Spleen (tissue), 13 donors: ENCODE measurements at regions of chr6 and their contacts with region 1.

Region 1: DNA sequence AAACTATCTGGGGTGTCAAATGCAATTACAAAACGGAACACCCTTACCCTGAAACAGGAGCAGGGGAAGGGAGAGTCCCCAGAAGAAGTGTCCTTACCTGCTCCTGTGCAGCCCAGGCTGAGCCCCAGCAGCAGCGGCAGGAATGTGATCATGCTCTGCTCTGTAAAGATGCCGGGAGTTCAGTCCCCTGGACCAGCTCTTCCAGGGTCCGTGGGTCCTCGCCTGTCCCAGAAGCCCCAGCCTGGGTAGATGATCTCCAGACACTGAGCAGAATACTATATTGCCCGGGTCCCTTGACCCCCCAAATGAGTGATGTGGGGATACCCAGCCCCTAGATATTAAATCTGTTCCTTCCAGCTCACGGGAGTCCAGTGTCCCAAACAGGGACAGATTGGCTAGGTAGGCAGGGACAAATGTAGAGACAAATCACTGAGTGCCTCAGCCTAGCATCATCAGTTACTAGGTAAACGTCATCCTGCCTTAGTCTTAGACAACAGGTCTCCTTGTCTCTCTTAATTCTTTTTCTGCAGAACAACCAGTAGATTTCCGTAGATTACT is at the start of gene HLA-DMB:
- DNase-seq: no peak
- H3K4me3 ChIP-seq: peak within 1 kb of the TSS; percentile 39 to 81 (median 64)
- H3K27ac ChIP-seq: peak within 1 kb of the TSS; percentile 79 to 96 (median 92)
- H3K4me1 ChIP-seq: peaks cover 43 to 100% (median 96%) of the 10 kb centered on the region in 6 donors
- H3K27me3 ChIP-seq: no peaks in the 10 kb centered on the region
- CTCF ChIP-seq: no peak
- POLR2A ChIP-seq: peak in 1 of 3 donors; percentile 86
- total RNA-seq, gene HLA-DMB: 124 to 178 (median 144) TPM

Region 2: GRCh38 chr6:32876603-32877002 is 64.1 kb before region 1 on chr6:
- intact Hi-C with region 1: no loop called
- DNase-seq: no peak
- H3K4me3 ChIP-seq: no peak overlapping the region
- H3K27ac ChIP-seq: no peak overlapping the region
- H3K4me1 ChIP-seq: no peaks in the 10 kb centered on the region
- H3K27me3 ChIP-seq: peaks cover 0 to 13% (median 0%) of the 10 kb centered on the region in 7 donors
- CTCF ChIP-seq: no peak
- POLR2A ChIP-seq: no peak

Region 3: GRCh38 chr6:32894080-32895005 is 46.4 kb before region 1 on chr6:
- intact Hi-C with region 1: loop called (anchors 10 kb)
- DNase-seq: peak; percentile 98
- H3K4me3 ChIP-seq: peak overlapping the region; percentile 65 to 90 (median 80)
- H3K27ac ChIP-seq: peak overlapping the region; percentile 71 to 96 (median 94)
- H3K4me1 ChIP-seq: peaks cover 8 to 66% (median 41%) of the 10 kb centered on the region in 6 donors
- H3K27me3 ChIP-seq: no peaks in the 10 kb centered on the region
- CTCF ChIP-seq: peak in 2 of 11 experiments; percentile 8 to 22
- POLR2A ChIP-seq: peak in 2 of 3 donors; percentile 2 to 3